Activated CD8-positive, alpha-beta T cell treated with anti-CD3 and anti-CD28 coated beads, Interleukin-2, amount 10 ng/mL, durations not matched to agents 7 days and 5 days (primary cell): ENCODE measurements at regions of chr1 and their contacts with region 1.

Region 1: DNA sequence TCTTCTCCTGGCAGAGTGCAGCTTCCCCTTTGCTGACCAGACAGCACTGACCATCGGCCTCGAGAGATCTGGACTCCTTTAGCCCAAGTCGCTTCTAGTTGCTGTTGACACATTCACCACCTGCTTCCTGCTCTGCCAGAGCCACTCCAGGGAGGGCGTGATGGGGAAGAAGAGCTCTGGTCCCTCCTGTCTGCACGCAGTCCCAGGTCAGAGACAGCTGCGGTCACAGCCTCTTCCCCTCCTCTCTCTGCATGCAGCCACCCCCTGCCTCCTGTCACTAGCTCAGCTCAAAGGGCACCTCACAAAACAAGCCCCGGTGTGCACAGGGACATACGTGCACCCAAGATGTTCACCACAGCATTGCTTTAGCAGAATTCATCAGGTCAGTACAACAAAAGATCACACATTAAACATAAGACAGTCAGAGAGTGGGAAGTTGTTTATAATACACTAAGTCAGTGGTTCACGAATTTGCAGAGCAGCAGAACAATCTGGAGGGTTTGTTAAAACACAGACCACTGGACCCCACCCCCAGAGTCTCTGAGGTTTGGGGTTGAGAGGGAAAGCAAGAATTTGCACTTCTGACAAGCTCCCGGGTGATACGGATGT is 132.9 kb downstream of the SYF2 start:
- DNase-seq: peak; percentile 79
- ATAC-seq: peak; percentile 62
- H3K4me3 Mint-ChIP-seq: peak overlapping the region; percentile 65
- H3K27ac Mint-ChIP-seq: peak overlapping the region; percentile 91
- H3K4me1 Mint-ChIP-seq: peaks cover 88% of the 10 kb centered on the region
- H3K27me3 Mint-ChIP-seq: peaks cover 8% of the 10 kb centered on the region

Region 2: DNA sequence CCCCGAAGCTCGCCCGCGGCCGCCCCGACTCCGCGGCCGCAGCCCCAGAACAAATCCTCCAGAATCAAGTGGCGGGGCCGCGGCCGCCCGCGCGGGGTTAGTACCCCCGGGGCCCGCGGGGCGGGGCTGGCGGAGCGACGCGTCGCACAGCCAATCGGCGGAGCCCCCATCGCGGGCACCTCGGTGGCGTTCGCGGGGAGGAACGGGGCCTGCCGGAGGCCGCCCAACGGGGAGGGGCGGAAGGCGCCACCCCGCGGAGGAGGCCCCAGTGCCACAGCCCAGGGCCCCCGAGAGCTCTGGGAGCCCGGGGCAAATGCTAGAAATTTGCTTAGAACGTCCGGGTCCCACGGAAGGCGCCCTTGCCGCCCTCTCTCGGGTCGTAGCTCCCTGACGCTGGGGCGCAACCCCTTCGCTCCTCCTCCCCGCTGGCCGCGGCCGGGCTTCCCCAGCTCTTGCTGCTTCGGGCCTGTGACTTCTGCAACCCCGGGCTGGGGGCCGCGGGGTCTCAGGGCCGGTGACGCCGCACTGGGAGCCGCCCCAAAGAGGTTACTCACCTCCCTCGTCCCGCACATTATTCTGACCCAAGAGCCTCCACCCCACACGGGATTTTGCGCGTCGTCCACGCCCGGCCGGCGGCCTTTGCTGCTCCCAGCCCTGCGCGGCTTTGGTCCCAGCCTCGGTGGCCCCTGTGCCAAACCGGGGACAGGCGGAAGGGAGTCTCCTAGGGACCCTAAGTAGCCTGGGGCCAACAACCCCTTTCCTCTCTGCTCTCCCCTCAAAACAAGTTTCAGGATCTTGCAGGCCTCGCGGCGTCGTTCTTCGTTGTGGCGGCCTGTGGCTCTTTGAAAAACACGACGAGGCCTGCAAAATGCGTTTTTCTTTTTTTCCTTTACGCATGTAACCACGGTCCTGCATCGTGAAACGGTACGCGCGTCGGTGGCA is 169.0 kb before region 1 on chr1 and contains the start of gene RUNX3:
- CTCF ChIA-PET with region 1: interaction called, 77 read pairs
- POLR2A ChIA-PET with region 1: interaction called, 8 read pairs
- DNase-seq: peak; percentile 92
- ATAC-seq: peak; percentile 79
- H3K4me3 Mint-ChIP-seq: peak within 1 kb of the TSS; percentile 95
- H3K27ac Mint-ChIP-seq: peak within 1 kb of the TSS; percentile 85
- H3K4me1 Mint-ChIP-seq: peaks cover 80% of the 10 kb centered on the region
- H3K27me3 Mint-ChIP-seq: no peaks in the 10 kb centered on the region
- total RNA-seq, gene RUNX3: 144 to 147 TPM

Region 3: DNA sequence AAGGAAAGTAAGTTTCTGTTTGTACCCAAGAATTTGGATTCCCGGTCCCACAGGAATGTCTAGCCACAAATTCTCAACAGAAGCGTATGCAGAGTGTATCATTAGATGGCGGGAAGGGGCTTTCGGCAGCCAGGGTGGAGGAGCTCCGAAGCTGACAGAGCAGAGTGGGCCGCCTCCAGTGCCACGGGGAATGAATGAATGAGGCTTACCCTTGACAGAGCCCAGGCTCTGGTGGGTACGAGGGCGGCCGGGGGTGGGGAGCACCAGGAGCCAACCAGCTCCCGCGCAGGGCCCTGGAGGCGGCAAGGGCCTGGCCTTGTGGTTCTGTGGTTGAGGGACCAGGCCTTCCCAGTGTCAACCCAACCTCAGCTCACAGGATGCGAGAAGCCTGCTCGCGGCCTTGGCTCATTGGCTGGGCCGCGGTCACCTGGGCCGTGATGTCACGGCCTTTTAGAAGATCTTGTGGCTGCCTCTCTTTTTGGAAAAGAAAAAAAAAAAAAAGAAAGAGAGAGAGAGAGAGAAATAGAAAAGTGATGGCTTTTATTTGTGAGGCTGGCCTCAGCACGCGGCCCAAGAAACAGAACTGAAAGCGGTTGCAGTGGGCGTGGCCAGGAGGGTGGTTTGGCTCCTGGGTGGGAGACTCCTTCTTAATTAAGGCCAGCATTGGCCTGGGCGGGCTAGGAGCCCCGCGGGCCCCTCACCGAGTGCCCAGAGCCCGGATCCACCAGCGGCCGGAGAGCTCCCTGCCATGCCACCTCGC is 134.5 kb before region 1 on chr1:
- CTCF ChIA-PET with region 1: interaction called, 109 read pairs
- POLR2A ChIA-PET with region 1: interaction called, 23 read pairs
- DNase-seq: peak; percentile 99
- ATAC-seq: peak; percentile 81
- H3K4me3 Mint-ChIP-seq: peak overlapping the region; percentile 92
- H3K27ac Mint-ChIP-seq: peak overlapping the region; percentile 98
- H3K4me1 Mint-ChIP-seq: peaks cover 67% of the 10 kb centered on the region
- H3K27me3 Mint-ChIP-seq: no peaks in the 10 kb centered on the region

Region 4: GRCh38 chr1:25031966-25032667 is 67.3 kb before region 1 on chr1:
- CTCF ChIA-PET with region 1: interaction called, 94 read pairs
- POLR2A ChIA-PET with region 1: interaction called, 6 read pairs
- DNase-seq: peak; percentile 82
- ATAC-seq: peak; percentile 32
- H3K4me3 Mint-ChIP-seq: peak overlapping the region; percentile 65
- H3K27ac Mint-ChIP-seq: no peak overlapping the region
- H3K4me1 Mint-ChIP-seq: peaks cover 39% of the 10 kb centered on the region
- H3K27me3 Mint-ChIP-seq: no peaks in the 10 kb centered on the region

Region 5: GRCh38 chr1:25088180-25088701 is 11.2 kb before region 1 on chr1:
- CTCF ChIA-PET with region 1: interaction called, 14 read pairs
- POLR2A ChIA-PET with region 1: interaction called, 3 read pairs
- DNase-seq: no peak
- ATAC-seq: no peak
- H3K4me3 Mint-ChIP-seq: no peak overlapping the region
- H3K27ac Mint-ChIP-seq: no peak overlapping the region
- H3K4me1 Mint-ChIP-seq: peaks cover 16% of the 10 kb centered on the region
- H3K27me3 Mint-ChIP-seq: peaks cover 39% of the 10 kb centered on the region

Region 6: GRCh38 chr1:25117233-25117823 is 17.9 kb after region 1 on chr1:
- CTCF ChIA-PET with region 1: interaction called, 15 read pairs
- POLR2A ChIA-PET with region 1: no interaction called
- DNase-seq: peak; percentile 39
- ATAC-seq: no peak
- H3K4me3 Mint-ChIP-seq: no peak overlapping the region
- H3K27ac Mint-ChIP-seq: no peak overlapping the region
- H3K4me1 Mint-ChIP-seq: peaks cover 25% of the 10 kb centered on the region
- H3K27me3 Mint-ChIP-seq: peaks cover 20% of the 10 kb centered on the region

Region 7: DNA sequence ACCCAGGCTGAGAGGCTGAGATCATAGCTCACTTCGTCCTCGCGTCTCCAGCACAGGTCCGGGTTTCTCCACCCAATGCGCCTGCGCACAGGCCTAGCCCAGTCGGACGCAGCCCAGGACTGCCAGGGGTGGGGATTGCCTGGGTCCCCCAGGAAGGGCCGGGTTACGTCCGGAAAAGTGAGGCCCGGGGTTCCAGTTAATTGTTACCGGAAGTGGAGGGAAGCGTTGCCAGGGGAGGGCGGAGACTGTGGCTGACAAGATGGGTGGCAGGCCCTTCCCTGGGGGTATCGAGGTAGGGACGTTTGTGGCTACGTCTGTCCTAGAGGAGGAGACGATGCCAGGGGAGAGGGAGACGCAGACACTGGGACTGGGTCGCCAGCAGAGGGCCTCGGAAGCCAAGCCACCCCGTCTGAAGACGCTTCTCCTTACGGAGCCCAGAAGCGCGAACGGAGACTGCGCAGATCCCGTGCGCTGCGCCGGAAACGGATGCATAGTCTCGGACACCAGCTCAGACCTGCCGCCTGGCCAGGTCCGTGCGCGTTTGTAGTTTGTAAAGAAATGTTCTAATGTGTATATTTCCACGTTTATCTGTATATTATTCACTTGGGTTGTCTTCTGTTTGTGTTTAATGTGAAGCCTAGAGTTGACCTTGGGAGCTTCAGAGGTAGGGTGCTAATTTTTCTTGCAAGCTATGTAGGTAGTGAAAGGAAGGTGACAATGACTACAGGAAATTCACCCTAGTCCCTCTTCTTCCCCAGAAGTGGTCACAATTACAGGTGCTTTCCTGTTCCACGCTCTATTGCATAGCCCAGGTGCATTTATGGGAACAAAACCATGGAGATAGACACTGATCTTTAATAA is 140.5 kb after region 1 on chr1:
- CTCF ChIA-PET with region 1: no interaction called
- POLR2A ChIA-PET with region 1: no interaction called
- DNase-seq: peak; percentile 93
- ATAC-seq: peak; percentile 88
- H3K4me3 Mint-ChIP-seq: peak overlapping the region; percentile 77
- H3K27ac Mint-ChIP-seq: peak overlapping the region; percentile 94
- H3K4me1 Mint-ChIP-seq: peaks cover 63% of the 10 kb centered on the region
- H3K27me3 Mint-ChIP-seq: no peaks in the 10 kb centered on the region